ENCODE measurements at regions of chr7 and their contacts with region 1.

Region 1: GRCh38 chr7:90720984-90721760 is 125.1 kb downstream of the CDK14 start:
- DNase-seq: no peak

Region 2: DNA sequence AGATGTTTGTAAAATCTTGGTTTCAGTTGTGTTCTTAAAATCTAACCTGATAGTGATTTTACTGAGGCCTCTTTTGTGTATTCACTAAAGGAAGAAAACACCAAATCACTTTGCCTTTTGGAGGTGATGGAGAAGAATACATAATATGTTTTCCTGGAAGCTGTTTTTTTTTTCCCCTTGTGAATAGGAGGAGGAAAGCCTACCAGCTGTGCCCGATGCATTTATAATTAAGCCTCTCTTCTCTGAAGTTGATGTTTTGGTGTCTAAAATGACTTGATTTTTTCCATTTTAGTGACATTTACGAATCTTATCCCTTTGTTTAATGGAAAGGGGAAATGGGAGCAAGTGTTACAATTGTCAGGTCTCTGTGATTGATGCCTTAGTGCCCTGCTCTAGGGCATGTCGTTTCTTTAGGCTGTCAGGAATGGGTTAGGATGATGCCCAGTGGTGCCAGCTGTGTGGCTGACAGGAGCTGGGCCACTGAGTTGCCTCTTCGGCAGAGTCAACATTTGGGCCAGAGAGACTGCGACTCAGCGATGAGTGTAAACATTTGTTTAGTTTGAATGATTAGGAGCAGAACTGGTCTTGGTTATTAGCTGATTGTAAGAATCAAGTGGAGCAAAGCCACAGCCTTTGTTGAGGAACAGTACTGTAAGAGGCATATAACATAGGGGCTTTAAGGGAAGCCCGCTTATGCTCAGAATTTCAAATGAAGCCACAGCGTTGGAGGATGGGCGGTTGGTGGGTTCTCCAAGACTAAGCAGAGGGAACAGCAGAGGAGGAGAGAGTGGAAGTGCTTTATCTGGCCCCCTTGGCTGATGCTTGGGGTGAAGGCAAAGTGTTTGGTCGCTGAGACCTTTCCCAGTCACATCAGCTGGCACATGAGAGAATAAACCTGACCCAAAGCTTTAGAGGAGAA is 43.4 kb before region 1 on chr7:
- intact Hi-C with region 1: loop called (anchors 10 kb)
- DNase-seq: no peak

Measured in cardiac septum (tissue), 1 donor.